GM12878 (cell line): ENCODE measurements at regions of chr4 and their contacts with region 1.

Region 1: GRCh38 chr4:122959441-122959840 is 37.0 kb upstream of the NUDT6 start:
- DNase-seq: no peak
- ATAC-seq: no peak
- H3K4me3 ChIP-seq: no peak overlapping the region
- H3K27ac ChIP-seq: no peak overlapping the region
- H3K4me1 ChIP-seq: no peaks in the 10 kb centered on the region
- H3K27me3 ChIP-seq: no peaks in the 10 kb centered on the region
- CTCF ChIP-seq: no peak
- EP300 ChIP-seq: no peak
- POLR2A ChIP-seq: no peak
- RAD21 ChIP-seq: no peak

Region 2: DNA sequence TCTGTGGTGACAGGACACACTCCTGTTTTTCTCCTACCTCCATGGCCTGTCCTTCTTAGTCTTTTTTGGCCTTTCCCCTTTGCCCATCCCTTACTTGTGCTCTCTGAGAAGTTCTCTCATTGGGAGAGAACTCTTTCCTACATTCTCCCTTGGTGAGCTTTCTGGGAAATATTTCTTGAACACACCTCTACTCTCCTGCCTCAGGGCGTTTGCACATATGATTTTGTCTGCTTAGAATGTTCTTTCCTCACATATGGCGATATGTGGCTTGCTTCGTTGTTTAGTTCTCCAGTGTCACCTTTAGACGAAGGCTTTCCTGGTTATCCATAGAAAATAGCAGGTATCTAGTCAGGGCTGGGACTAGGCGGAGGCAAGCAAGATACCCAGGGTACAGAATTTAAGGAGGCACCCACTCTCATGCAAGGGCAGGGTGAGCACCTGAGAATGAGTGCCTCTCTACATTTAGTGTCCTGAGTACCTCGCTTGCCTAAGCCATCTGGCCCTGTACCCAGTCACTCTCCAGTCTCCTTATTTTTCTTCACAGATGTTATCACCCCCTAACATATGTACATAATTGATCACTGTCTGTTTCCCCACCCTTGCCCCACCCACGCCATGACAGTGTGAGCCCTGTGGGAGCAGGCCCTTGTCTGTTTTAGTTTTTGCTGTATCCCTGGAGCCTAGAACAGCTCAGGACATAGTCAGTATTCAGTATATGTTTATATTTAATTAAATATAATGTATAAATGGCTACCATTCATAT is 550.6 kb after region 1 on chr4:
- CTCF ChIA-PET with region 1: no interaction called
- POLR2A ChIA-PET with region 1: interaction called, 10 read pairs
- RAD21 ChIA-PET with region 1: no interaction called
- SMC1A ChIA-PET with region 1: no interaction called
- in situ Hi-C with region 1: no loop called
- intact Hi-C with region 1: no loop called
- DNase-seq: no peak
- ATAC-seq: no peak
- H3K4me3 ChIP-seq: no peak overlapping the region
- H3K27ac ChIP-seq: no peak overlapping the region
- H3K4me1 ChIP-seq: no peaks in the 10 kb centered on the region
- H3K27me3 ChIP-seq: no peaks in the 10 kb centered on the region; a peak in 1 of 4 replicates
- CTCF ChIP-seq: no peak
- EP300 ChIP-seq: no peak
- POLR2A ChIP-seq: no peak
- RAD21 ChIP-seq: no peak